ENCODE measurements at regions of chr6 and their contacts with region 1.

Region 1: DNA sequence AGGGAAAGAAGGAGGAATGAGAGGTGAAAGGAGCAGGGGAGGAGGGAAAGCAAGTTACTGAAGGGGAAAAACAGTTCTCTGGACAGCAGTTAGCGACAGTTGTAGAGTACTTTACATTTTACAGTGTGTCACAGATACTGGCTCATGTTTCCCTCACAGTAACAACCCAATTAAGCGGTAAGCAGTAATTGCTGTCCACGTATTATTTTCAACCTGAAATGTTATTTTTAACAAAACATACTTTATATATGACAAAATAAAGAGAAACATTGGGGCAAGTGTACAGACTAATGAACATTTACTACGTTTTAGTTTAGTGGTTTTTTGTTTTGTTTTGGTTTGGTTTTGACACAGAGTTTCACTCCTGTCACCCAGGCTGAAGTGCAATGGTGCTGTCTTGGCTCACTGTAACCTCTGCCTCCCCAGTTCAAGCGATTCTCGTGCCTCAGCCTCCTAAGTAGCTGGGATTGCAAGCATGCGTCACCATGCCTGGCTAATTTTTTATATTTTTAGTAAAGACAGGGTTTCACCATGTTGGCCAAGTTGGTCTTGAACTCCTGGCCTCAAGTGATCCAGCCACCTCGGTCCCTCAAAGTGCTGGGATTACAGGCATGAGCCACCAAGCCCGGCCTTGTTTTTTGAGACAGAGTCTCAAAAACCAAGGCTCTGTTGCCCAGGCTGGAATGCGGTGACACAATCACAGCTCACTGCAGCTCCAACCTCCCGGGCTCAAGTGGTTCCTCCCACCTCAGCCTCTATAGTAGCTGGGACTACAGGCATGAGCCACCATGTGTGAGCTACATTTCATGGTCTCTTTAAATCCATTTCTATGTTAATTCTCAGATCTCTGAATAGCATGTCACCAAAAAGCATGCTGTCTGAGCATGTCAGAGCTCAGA is 22.6 kb upstream of the BTN3A2 start:
- DNase-seq: no peak
- H3K4me3 ChIP-seq: peak overlapping the region in 2 of 3 donors; percentile 21 to 24
- H3K27ac ChIP-seq: no peak overlapping the region
- H3K4me1 ChIP-seq: no peaks in the 10 kb centered on the region
- H3K27me3 ChIP-seq: peaks cover 0 to 8% of the 10 kb centered on the region in 2 donors
- CTCF ChIP-seq: no peak
- POLR2A ChIP-seq: no peak

Region 2: GRCh38 chr6:24827162-24827561 is 1515.2 kb before region 1 on chr6:
- intact Hi-C with region 1: no loop called
- DNase-seq: no peak
- H3K4me3 ChIP-seq: no peak overlapping the region
- H3K27ac ChIP-seq: peak overlapping the region in 1 of 2 donors; percentile 8
- H3K4me1 ChIP-seq: peaks cover 3 to 7% of the 10 kb centered on the region in 2 donors
- H3K27me3 ChIP-seq: no peaks in the 10 kb centered on the region
- CTCF ChIP-seq: no peak
- POLR2A ChIP-seq: no peak

Region 3: DNA sequence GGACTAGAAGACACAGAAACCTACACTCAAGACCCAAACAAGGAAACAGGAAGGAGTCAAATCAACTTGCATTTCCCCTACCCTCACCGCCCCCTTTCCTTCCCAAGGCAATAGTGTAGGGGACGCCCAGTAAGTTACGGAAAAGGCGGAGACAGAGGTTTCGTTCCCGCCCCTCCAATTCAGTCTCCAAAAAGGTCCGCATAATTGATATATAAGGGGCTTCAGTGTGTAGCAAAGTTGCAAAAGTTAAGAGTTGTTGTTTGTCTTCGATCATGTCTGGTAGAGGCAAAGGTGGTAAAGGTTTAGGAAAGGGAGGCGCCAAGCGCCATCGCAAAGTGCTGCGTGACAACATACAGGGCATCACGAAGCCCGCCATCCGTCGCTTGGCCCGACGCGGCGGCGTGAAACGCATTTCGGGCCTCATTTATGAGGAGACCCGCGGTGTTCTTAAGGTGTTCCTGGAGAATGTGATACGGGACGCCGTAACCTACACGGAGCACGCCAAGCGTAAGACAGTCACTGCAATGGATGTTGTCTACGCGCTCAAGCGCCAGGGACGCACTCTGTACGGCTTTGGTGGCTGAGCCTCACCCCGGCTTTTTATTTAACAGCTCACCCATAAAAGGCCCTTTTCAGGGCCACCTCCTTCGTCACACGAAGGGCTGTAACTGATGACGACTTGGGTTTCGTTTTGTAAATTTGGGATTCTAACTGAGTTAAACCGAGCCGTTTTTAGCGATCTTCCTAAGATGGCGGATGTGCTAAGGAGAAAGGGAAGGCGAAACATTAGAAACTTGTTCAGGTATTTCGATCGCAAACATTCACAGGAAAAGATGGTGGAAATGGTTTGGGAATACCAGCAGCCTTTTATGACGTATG is 102.0 kb before region 1 on chr6:
- intact Hi-C with region 1: no loop called
- DNase-seq: peak; percentile 62 to 76
- H3K4me3 ChIP-seq: peak overlapping the region; percentile 38 to 67 (median 58)
- H3K27ac ChIP-seq: peak overlapping the region; percentile 89 to 91
- H3K4me1 ChIP-seq: no peaks in the 10 kb centered on the region
- H3K27me3 ChIP-seq: no peaks in the 10 kb centered on the region
- CTCF ChIP-seq: no peak
- POLR2A ChIP-seq: peak; percentile 48

Region 4: DNA sequence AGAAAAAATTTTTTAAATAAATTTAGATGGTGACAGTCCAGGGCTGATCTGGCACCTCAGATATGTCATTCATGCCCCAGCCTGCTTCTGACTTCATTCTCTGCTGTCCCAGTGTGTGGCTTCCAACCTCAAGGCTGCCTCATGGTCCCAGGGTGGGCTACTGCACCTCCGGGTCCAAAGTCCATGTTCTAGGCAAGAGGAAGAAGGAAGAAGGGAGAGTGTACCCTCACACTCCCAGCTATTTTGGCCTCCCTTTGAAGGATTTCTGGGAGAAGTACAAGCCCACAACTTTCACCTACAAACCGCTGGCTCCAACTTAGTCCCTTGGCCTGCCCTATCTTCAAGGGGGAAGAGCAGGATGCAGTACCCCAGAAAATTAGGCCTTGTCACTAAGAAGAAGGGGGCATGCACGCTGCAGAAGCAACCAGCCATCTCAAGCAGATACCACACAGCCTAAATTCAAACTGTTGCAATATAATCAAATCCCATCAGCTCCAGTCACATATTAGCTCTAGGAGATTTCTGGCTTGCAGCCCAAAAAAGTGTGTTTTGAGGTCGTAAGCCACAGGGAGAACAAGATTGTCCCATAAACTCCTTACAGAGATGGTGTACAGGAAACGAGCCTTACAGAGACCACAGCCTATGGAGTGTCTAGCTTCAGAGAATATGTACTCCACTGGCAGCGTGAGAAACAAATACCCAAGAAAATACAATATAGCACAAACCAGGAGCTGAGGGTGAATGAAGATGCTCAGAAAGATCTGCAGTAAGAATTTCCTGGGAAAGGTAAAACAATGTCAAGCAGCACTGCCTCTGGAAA is 21.7 kb after region 1 on chr6:
- intact Hi-C with region 1: no loop called
- DNase-seq: no peak
- H3K4me3 ChIP-seq: peak overlapping the region; percentile 55 to 74 (median 62)
- H3K27ac ChIP-seq: peak overlapping the region; percentile 88 to 91
- H3K4me1 ChIP-seq: no peaks in the 10 kb centered on the region
- H3K27me3 ChIP-seq: no peaks in the 10 kb centered on the region
- CTCF ChIP-seq: no peak
- POLR2A ChIP-seq: no peak

Region 5: GRCh38 chr6:26457806-26458688 is 115.7 kb after region 1 on chr6 and contains the start of gene BTN2A1:
- intact Hi-C with region 1: loop called (anchors 10 kb)
- DNase-seq: peak; percentile 64 to 83
- H3K4me3 ChIP-seq: peak within 1 kb of the TSS; percentile 84 to 94 (median 86)
- H3K27ac ChIP-seq: peak within 1 kb of the TSS; percentile 97 to 98
- H3K4me1 ChIP-seq: peaks cover 6 to 18% of the 10 kb centered on the region in 2 donors
- H3K27me3 ChIP-seq: no peaks in the 10 kb centered on the region
- CTCF ChIP-seq: no peak
- POLR2A ChIP-seq: peak; percentile 36
- total RNA-seq, gene BTN2A1: 10.6 to 19.6 (median 14.1) TPM

Measured in breast epithelium (tissue), 4 donors.